PC-3 (cell line): ENCODE measurements at regions of chr13 and their contacts with region 1.

Region 1: GRCh38 chr13:111020546-111020945 is 94.6 kb upstream of the ARHGEF7 start:
- DNase-seq: peak; percentile 27
- ATAC-seq: peak; percentile 31; the same call in 1 of the 2 replicates
- H3K4me3 ChIP-seq: no peak overlapping the region
- H3K27ac ChIP-seq: no peak overlapping the region
- H3K4me1 ChIP-seq: no peaks in the 10 kb centered on the region
- H3K27me3 ChIP-seq: no peaks in the 10 kb centered on the region
- CTCF ChIP-seq: no peak

Region 2: DNA sequence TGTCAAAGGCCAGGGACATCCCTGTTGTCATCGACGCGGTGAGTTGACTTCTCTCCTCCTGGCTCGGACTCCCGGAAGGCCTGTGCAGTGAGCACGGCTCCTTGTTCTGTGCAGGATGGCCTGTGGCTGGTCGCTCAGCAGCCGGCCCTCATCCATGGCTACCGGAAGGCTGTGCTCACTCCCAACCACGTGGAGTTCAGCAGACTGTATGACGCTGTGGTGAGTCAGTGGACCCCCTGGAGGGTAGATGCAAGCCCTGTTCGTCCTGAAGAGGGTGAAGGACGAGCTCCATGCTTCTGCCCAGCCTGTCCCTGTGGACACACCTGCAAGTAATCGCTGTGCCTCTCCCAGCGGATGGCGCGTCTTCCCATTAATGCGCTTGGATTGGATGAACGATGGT is 386.0 kb before region 1 on chr13:
- CTCF ChIA-PET with region 1: no interaction called
- POLR2A ChIA-PET with region 1: no interaction called
- intact Hi-C with region 1: no loop called
- DNase-seq: peak; percentile 25
- ATAC-seq: peak; percentile 70
- H3K4me3 ChIP-seq: no peak overlapping the region
- H3K27ac ChIP-seq: no peak overlapping the region
- H3K4me1 ChIP-seq: no peaks in the 10 kb centered on the region
- H3K27me3 ChIP-seq: no peaks in the 10 kb centered on the region
- CTCF ChIP-seq: no peak

Region 3: DNA sequence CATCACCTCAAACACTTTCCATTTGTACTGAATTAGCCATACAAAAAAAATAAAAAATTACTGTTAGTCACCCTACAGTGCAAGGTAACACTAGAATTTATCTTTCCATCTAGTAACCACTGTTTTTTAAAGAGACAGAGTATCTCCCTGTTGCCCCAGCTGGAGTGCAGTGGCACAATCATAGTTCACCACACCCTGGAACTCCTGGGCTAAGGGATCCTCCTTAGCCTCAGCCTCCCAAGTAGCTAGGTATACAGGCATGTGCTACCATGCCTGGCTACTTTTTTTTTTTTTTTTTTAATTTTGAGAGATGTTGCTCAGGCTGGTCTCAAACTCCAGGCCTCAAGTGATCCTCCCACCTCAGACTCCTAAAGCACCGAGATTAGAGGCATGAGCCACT is 123.5 kb before region 1 on chr13:
- CTCF ChIA-PET with region 1: no interaction called
- POLR2A ChIA-PET with region 1: no interaction called
- intact Hi-C with region 1: no loop called
- DNase-seq: no peak
- ATAC-seq: no peak
- H3K4me3 ChIP-seq: no peak overlapping the region
- H3K27ac ChIP-seq: no peak overlapping the region
- H3K4me1 ChIP-seq: no peaks in the 10 kb centered on the region
- H3K27me3 ChIP-seq: no peaks in the 10 kb centered on the region
- CTCF ChIP-seq: no peak

Region 4: DNA sequence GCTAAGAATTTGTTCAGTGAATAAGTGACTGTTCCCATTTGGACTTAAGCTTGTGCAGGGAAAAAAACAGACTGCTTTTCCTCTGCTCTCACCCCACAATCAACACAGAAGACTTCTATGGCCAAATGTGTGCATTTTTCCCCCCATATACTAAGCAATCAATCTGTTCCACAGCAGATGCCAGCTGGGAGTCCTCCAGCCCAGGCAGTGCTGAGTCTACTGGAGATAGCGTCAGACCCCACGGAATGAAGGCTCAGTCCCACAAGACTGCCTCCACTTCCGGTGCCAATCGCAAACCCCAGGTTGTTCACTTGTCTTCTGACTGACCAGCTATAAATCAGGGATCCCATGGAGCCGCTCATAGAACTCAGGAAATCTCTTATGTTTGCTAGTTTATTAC is 36.2 kb before region 1 on chr13:
- CTCF ChIA-PET with region 1: no interaction called
- POLR2A ChIA-PET with region 1: no interaction called
- intact Hi-C with region 1: loop called (anchors 5 kb)
- DNase-seq: no peak
- ATAC-seq: no peak
- H3K4me3 ChIP-seq: no peak overlapping the region
- H3K27ac ChIP-seq: no peak overlapping the region
- H3K4me1 ChIP-seq: peaks cover 18% of the 10 kb centered on the region
- H3K27me3 ChIP-seq: no peaks in the 10 kb centered on the region
- CTCF ChIP-seq: no peak